GM12878 (cell line): ENCODE measurements at regions of chr12 and their contacts with region 1.

Region 1: DNA sequence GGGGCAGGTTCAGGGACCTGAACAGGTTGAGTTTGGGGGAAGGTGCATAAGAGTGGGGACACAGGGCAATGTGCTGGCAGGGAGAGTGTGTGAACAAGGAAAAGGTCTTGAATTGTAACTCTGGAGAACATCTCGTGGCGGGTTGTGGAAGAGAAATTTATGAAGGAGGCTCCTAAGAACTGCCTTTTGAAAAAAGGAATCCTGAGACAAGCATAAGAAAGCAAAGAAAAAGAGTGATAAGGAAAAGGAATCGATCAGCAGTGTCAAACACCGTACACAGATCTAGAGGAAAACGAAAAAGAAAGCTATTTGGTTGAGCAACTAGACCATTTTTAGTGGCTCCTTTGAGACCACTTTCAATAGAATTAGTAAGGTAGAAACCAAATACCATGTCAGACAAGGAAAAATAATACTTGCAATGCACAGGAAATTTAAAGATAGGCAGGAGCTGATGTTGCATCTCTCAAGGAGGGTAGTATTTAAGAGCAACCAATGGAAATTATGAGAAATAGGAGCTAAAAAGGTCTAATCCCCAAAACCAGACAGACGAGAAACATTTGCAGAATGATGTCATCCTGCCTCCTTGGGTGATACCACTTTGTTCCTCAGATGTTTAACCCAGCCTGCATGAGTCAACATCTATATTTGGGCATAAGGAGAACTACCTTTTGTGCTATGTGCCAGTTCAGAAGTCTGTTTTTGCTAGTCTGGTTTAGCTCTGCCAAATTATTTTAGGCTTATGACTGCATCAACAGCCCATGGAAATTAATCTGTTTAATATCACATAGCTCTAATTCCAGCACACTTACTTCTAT is 64.5 kb upstream of the STK38L start:
- DNase-seq: peak; percentile 96
- ATAC-seq: peak; percentile 94
- H3K4me3 ChIP-seq: peak overlapping the region; percentile 23
- H3K27ac ChIP-seq: peak overlapping the region; percentile 94
- H3K4me1 ChIP-seq: peaks cover 37% of the 10 kb centered on the region
- H3K27me3 ChIP-seq: no peaks in the 10 kb centered on the region
- CTCF ChIP-seq: no peak
- EP300 ChIP-seq: peak; percentile 27 to 48; a peak in 1 of 4 replicates
- POLR2A ChIP-seq: 0 out of 2 replicates have a peak, but pooled peaks have one; percentile 22
- RAD21 ChIP-seq: no peak

Region 2: DNA sequence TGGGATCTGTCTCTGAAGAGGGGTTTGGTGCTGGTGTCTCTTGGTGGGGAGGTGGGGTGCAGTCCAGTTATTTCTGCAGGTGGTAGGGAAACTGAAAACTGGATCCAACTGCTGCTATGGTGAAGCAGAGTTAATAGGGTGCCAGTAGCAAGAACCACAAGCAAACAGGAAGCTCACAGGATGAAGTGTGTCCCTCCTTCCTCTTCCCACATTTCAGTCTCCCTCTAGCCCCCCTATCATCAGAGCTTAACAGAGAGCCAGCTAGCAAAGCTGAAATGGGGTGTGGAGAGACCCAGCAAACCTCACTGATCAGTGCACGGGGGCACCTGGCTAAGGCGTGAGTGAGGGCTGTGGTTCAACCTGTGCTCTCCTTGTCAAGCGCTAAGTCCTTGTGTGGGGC is 28.1 kb before region 1 on chr12:
- CTCF ChIA-PET with region 1: interaction called, 9 read pairs
- POLR2A ChIA-PET with region 1: interaction called, 12 read pairs
- RAD21 ChIA-PET with region 1: interaction called, 11 read pairs
- SMC1A ChIA-PET with region 1: interaction called, 123 read pairs
- in situ Hi-C with region 1: no loop called
- intact Hi-C with region 1: no loop called
- DNase-seq: no peak
- ATAC-seq: no peak
- H3K4me3 ChIP-seq: no peak overlapping the region
- H3K27ac ChIP-seq: no peak overlapping the region
- H3K4me1 ChIP-seq: peaks cover 17% of the 10 kb centered on the region
- H3K27me3 ChIP-seq: no peaks in the 10 kb centered on the region
- CTCF ChIP-seq: no peak
- EP300 ChIP-seq: no peak
- POLR2A ChIP-seq: no peak
- RAD21 ChIP-seq: no peak

Region 3: GRCh38 chr12:27193854-27194544 is 14.4 kb after region 1 on chr12:
- CTCF ChIA-PET with region 1: interaction called, 12 read pairs
- POLR2A ChIA-PET with region 1: interaction called, 19 read pairs
- RAD21 ChIA-PET with region 1: interaction called, 28 read pairs
- SMC1A ChIA-PET with region 1: interaction called, 51 read pairs
- in situ Hi-C with region 1: no loop called
- intact Hi-C with region 1: no loop called
- DNase-seq: no peak
- ATAC-seq: no peak
- H3K4me3 ChIP-seq: no peak overlapping the region
- H3K27ac ChIP-seq: no peak overlapping the region
- H3K4me1 ChIP-seq: no peaks in the 10 kb centered on the region
- H3K27me3 ChIP-seq: no peaks in the 10 kb centered on the region
- CTCF ChIP-seq: no peak
- EP300 ChIP-seq: no peak
- POLR2A ChIP-seq: no peak
- RAD21 ChIP-seq: no peak

Region 4: DNA sequence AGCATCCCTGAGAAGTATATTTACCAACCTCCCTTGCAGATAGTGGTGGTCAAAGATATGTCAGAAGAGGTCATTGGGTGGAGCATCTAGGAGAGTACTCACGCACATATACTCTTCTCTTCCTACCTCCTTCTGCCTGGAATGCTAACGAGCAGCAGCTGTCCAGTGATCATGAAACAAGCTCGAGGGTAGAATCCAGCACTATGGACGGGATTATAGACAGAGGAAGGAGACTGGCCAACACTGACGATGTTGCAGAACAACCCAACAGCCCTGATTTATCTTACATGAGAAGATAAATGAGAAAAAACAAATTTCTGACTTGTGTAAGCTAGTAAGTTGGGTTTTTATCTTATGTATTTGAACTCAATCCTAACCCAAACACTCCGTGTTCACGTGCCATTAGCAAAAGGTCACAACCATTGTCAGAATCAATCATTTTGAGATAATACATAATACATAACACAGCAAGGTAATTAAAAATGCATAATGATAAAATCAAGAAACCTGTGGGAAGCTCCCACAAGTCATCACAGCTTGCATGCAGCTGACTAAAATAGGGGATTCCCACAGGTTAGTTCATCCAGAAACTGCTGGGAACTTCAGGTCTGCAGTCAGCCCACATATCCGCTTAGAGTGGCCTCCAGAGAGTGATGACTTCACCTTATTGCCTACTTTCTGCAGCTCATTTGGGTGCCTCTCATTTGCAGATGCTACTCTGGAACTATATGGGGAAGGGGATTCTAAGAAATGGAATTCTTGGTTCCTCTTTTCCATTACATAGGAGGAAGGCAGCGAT is 28.2 kb after region 1 on chr12:
- CTCF ChIA-PET with region 1: interaction called, 24 read pairs
- POLR2A ChIA-PET with region 1: interaction called, 20 read pairs
- RAD21 ChIA-PET with region 1: interaction called, 79 read pairs
- SMC1A ChIA-PET with region 1: interaction called, 139 read pairs
- in situ Hi-C with region 1: no loop called
- intact Hi-C with region 1: loop called (anchors 1 kb)
- DNase-seq: peak; percentile 93
- ATAC-seq: peak; percentile 92
- H3K4me3 ChIP-seq: peak overlapping the region; percentile 44
- H3K27ac ChIP-seq: peak overlapping the region; percentile 97
- H3K4me1 ChIP-seq: peaks cover 35% of the 10 kb centered on the region
- H3K27me3 ChIP-seq: no peaks in the 10 kb centered on the region
- CTCF ChIP-seq: no peak
- EP300 ChIP-seq: peak; percentile 65 to 78; a peak in 3 of 4 replicates
- POLR2A ChIP-seq: no peak
- RAD21 ChIP-seq: peak; percentile 34; the same call in 1 of the 2 replicates

Region 5: GRCh38 chr12:27237790-27238771 is 58.5 kb after region 1 on chr12:
- CTCF ChIA-PET with region 1: interaction called, 6 read pairs
- POLR2A ChIA-PET with region 1: interaction called, 10 read pairs
- RAD21 ChIA-PET with region 1: interaction called, 24 read pairs
- SMC1A ChIA-PET with region 1: interaction called, 51 read pairs
- in situ Hi-C with region 1: no loop called
- intact Hi-C with region 1: no loop called
- DNase-seq: peak; percentile 72
- ATAC-seq: peak; percentile 82
- H3K4me3 ChIP-seq: peak overlapping the region; percentile 31
- H3K27ac ChIP-seq: peak overlapping the region; percentile 82
- H3K4me1 ChIP-seq: peaks cover 32% of the 10 kb centered on the region
- H3K27me3 ChIP-seq: no peaks in the 10 kb centered on the region
- CTCF ChIP-seq: no peak
- EP300 ChIP-seq: peak in 1 of 2 experiments; percentile 40; a peak in 1 of 4 replicates
- POLR2A ChIP-seq: no peak
- RAD21 ChIP-seq: peak; percentile 7; the same call in 1 of the 2 replicates

Region 6: DNA sequence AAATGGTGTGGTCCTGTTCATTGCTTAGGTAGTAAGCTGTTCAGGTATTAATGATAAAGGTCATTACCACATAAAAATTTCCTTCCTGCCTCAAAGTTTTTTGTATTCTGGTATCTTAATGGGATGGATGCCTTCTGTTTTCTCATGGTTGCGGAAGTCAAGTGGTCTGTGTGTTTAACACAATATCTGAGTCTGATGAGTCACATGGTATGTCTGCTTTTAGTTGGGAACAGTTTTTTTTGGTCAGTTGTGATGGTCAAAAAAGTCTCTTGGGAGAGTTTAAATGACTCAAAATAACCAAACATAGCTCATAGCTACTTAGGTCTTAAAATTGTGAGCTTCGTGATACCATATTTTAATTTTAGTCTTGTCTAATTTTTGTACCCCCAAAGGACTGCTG is 105.1 kb after region 1 on chr12:
- CTCF ChIA-PET with region 1: interaction called, 6 read pairs
- POLR2A ChIA-PET with region 1: interaction called, 7 read pairs
- RAD21 ChIA-PET with region 1: interaction called, 18 read pairs
- SMC1A ChIA-PET with region 1: interaction called, 25 read pairs
- in situ Hi-C with region 1: no loop called
- intact Hi-C with region 1: no loop called
- DNase-seq: peak; percentile 89
- ATAC-seq: peak; percentile 67
- H3K4me3 ChIP-seq: no peak overlapping the region
- H3K27ac ChIP-seq: peak overlapping the region; percentile 70; the same call in 1 of the 2 replicates
- H3K4me1 ChIP-seq: peaks cover 28% of the 10 kb centered on the region
- H3K27me3 ChIP-seq: no peaks in the 10 kb centered on the region
- CTCF ChIP-seq: no peak
- EP300 ChIP-seq: peak; percentile 69 to 77; a peak in 3 of 4 replicates
- POLR2A ChIP-seq: no peak
- RAD21 ChIP-seq: no peak